ENCODE measurements at regions of chr6 and their contacts with region 1.

Region 1: GRCh38 chr6:160930547-160931377 is 60.8 kb upstream of the MAP3K4 start:
- DNase-seq: peak; percentile 23
- ATAC-seq: peak; percentile 97
- H3K4me3 ChIP-seq: no peak overlapping the region
- H3K27ac ChIP-seq: no peak overlapping the region
- H3K4me1 ChIP-seq: no peaks in the 10 kb centered on the region
- H3K27me3 ChIP-seq: no peaks in the 10 kb centered on the region
- CTCF ChIP-seq: peak; percentile 64 to 84 (median 78)
- POLR2A ChIP-seq: no peak
- RAD21 ChIP-seq: peak; percentile 90

Region 2: DNA sequence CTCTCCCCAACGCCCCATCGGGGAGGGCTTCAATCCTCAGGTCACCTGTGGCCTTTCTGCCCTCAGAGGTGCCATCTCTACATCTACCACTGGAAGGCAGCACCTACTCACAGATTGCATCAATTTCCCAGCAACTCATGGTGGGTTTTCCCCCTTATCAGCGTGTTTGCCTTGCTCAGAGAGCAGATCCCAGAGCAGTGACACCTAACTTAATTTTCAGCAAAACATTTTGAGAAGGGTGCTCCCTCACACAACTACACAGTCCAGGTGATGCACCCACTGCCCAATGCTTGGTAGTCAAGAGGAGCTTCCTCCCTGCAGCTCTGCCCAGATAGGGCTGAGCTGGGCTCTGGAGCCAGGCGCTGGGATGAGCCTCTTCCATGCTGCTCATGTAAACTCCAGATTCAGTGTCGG is 180.5 kb before region 1 on chr6:
- CTCF ChIA-PET with region 1: interaction called, 3 read pairs
- POLR2A ChIA-PET with region 1: no interaction called
- RAD21 ChIA-PET with region 1: interaction called in 1 of 2 experiments, 5 read pairs
- intact Hi-C with region 1: loop called (anchors 2 kb)
- DNase-seq: peak; percentile 18
- ATAC-seq: peak; percentile 87
- H3K4me3 ChIP-seq: no peak overlapping the region
- H3K27ac ChIP-seq: no peak overlapping the region
- H3K4me1 ChIP-seq: no peaks in the 10 kb centered on the region
- H3K27me3 ChIP-seq: peaks cover 4% of the 10 kb centered on the region; the same call in 1 of the 2 replicates
- CTCF ChIP-seq: peak; percentile 67 to 90 (median 80)
- POLR2A ChIP-seq: no peak
- RAD21 ChIP-seq: peak; percentile 94

Region 3: DNA sequence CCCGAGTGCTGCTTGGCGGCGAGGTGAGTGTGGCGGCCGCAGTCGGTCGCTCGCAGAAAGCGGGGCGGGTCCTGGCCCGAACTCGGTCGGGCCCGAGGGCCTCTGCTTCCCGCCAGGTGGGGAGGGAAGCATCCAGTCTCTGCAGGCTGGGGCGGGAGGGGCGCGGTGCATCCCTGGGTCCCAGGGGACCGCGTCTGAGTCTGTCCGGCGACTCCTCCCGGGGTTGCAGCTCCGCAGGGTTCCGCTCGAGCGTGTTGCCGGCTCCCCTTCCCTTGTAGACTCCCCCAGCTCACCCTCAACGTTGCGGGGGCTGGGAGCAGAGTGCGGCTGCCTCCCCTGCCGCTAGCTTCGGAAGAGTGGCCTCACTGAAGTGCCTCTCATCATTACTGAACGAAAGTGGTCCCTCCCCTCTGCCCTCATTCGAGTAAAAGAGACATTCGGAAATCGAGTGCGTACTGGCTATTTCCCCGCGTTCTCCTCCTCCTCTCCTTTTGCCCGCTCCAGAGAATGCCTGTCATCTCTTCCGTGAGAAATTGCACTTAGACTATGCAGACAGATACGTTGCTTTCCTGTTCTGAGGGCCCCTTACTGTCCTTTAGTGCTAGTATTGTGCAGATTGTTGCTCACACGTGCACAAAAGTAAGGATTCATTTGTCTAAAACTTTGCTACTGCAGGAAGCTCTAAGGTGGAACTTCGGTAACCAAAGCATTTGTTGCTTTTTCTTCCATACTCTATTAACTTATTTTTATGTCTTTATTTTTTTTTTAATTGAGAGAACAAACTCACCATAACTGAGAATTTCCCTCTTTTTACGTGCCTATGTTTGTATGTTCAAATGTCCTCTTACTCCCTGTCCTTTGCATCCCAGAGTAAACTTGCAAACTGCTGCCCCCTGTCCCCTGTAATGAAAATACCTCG is 61.6 kb after region 1 on chr6:
- CTCF ChIA-PET with region 1: interaction called, 4 read pairs
- POLR2A ChIA-PET with region 1: no interaction called
- RAD21 ChIA-PET with region 1: no interaction called
- intact Hi-C with region 1: loop called (anchors 5 kb)
- DNase-seq: peak; percentile 42
- ATAC-seq: peak; percentile 63
- H3K4me3 ChIP-seq: peak overlapping the region; percentile 87 to 97
- H3K27ac ChIP-seq: peak overlapping the region; percentile 89
- H3K4me1 ChIP-seq: peaks cover 3 to 18% of the 10 kb centered on the region in 2 experiments; a peak in 3 of 4 replicates
- H3K27me3 ChIP-seq: no peaks in the 10 kb centered on the region
- CTCF ChIP-seq: peak; percentile 49 to 69 (median 69); a peak in 5 of 6 replicates
- POLR2A ChIP-seq: no peak
- RAD21 ChIP-seq: peak; percentile 63

Region 4: GRCh38 chr6:161079566-161080262 is 149.0 kb after region 1 on chr6:
- CTCF ChIA-PET with region 1: no interaction called
- POLR2A ChIA-PET with region 1: no interaction called
- RAD21 ChIA-PET with region 1: no interaction called
- intact Hi-C with region 1: no loop called
- DNase-seq: no peak
- ATAC-seq: no peak
- H3K4me3 ChIP-seq: no peak overlapping the region
- H3K27ac ChIP-seq: no peak overlapping the region
- H3K4me1 ChIP-seq: peaks cover 0 to 7% of the 10 kb centered on the region in 2 experiments; a peak in 2 of 4 replicates
- H3K27me3 ChIP-seq: no peaks in the 10 kb centered on the region
- CTCF ChIP-seq: no peak
- POLR2A ChIP-seq: no peak
- RAD21 ChIP-seq: no peak

Region 5: DNA sequence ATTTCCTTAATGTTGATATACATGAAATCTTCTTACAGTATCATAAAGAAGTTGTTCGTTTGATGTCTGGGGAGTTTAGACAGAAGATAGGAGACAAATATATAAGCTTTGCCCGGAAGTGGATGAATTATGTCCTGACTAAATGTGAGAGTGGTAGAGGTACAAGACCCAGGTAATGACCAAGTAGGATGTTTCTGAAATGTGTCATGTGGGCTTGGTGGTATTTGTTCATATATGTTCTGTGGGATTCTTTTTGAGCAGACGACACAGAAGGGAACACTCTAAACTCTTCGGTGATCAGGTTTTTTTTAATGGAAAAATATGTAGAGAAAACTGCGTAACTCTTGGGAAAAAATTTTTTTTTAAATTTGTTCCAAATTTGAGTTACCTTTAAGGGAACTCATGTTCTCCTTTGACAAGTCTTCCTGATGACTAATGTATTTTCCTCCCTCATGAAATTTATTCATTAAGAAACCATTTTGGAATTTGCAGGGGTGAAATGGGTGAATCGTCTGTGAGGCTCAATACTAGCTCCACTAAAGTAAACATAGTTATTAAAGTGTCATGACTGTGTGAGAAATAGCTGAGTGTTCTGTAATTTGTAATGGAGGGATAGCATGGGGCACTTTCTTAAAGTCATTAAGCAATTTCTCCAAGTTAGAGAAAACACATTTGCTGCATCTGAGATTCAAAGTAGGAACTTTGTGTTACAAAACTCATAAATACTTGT is 161.4 kb after region 1 on chr6:
- CTCF ChIA-PET with region 1: no interaction called
- POLR2A ChIA-PET with region 1: no interaction called
- RAD21 ChIA-PET with region 1: no interaction called
- intact Hi-C with region 1: loop called (anchors 10 kb)
- DNase-seq: no peak
- ATAC-seq: no peak
- H3K4me3 ChIP-seq: no peak overlapping the region
- H3K27ac ChIP-seq: no peak overlapping the region
- H3K4me1 ChIP-seq: peaks cover 0 to 7% of the 10 kb centered on the region in 2 experiments; a peak in 2 of 4 replicates
- H3K27me3 ChIP-seq: no peaks in the 10 kb centered on the region
- CTCF ChIP-seq: no peak
- POLR2A ChIP-seq: no peak
- RAD21 ChIP-seq: no peak

Region 6: DNA sequence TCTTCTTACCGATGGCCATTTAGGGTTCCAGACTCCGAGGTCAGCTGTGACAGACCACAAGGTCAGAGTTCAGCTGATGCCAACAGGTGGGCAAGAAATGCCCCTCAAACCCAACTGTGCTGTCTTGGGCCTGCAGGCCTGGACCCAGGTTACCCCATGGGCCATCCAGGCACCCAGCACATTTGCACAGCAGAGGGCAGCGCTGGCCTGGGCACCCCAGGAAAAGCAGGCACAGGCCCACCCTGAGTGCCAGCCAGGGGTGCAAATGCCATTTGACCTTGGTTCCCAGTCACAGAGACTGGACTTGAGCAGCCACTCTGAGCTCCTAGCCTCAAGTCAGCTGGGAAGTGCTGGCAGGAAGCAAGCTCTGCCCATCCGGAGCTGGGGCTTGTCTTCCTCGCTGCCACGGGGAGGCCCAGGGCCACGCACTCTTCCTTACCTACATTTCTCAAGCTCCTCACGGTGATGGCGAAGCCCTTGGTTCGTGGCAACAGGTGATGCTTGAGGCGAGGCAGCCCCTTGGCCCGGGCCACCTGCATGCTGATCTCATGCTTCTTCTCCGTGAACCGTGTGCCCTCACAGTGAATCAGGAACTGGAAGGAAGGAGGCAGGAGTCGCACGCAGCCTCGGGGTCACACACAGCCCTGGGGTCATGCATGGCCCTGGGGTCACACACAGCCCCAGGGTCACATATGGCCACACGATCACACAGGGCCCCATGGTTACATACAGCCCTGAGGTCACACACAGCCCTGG is 222.3 kb after region 1 on chr6:
- CTCF ChIA-PET with region 1: no interaction called
- POLR2A ChIA-PET with region 1: no interaction called
- RAD21 ChIA-PET with region 1: no interaction called
- intact Hi-C with region 1: loop called (anchors 5 kb)
- DNase-seq: no peak
- ATAC-seq: peak; percentile 84
- H3K4me3 ChIP-seq: no peak overlapping the region
- H3K27ac ChIP-seq: no peak overlapping the region
- H3K4me1 ChIP-seq: no peaks in the 10 kb centered on the region
- H3K27me3 ChIP-seq: no peaks in the 10 kb centered on the region
- CTCF ChIP-seq: peak; percentile 53 to 70 (median 64); a peak in 5 of 6 replicates
- POLR2A ChIP-seq: no peak
- RAD21 ChIP-seq: peak; percentile 91

Region 7: GRCh38 chr6:161163466-161164181 is 232.9 kb after region 1 on chr6:
- CTCF ChIA-PET with region 1: no interaction called
- POLR2A ChIA-PET with region 1: no interaction called
- RAD21 ChIA-PET with region 1: no interaction called
- intact Hi-C with region 1: no loop called
- DNase-seq: no peak
- ATAC-seq: no peak
- H3K4me3 ChIP-seq: no peak overlapping the region
- H3K27ac ChIP-seq: no peak overlapping the region
- H3K4me1 ChIP-seq: peaks cover 8 to 11% of the 10 kb centered on the region in 2 experiments
- H3K27me3 ChIP-seq: no peaks in the 10 kb centered on the region
- CTCF ChIP-seq: no peak
- POLR2A ChIP-seq: no peak
- RAD21 ChIP-seq: no peak

Region 8: GRCh38 chr6:161507375-161507774 is 576.6 kb after region 1 on chr6:
- CTCF ChIA-PET with region 1: no interaction called
- POLR2A ChIA-PET with region 1: no interaction called
- RAD21 ChIA-PET with region 1: no interaction called
- intact Hi-C with region 1: no loop called
- DNase-seq: no peak
- ATAC-seq: no peak
- H3K4me3 ChIP-seq: no peak overlapping the region
- H3K27ac ChIP-seq: no peak overlapping the region
- H3K4me1 ChIP-seq: no peaks in the 10 kb centered on the region
- H3K27me3 ChIP-seq: no peaks in the 10 kb centered on the region
- CTCF ChIP-seq: no peak
- POLR2A ChIP-seq: no peak
- RAD21 ChIP-seq: no peak

Measured in HCT116 (cell line).